CD4-positive, alpha-beta T cell (primary cell): ENCODE measurements at regions of chr2 and their contacts with region 1.

Region 1: DNA sequence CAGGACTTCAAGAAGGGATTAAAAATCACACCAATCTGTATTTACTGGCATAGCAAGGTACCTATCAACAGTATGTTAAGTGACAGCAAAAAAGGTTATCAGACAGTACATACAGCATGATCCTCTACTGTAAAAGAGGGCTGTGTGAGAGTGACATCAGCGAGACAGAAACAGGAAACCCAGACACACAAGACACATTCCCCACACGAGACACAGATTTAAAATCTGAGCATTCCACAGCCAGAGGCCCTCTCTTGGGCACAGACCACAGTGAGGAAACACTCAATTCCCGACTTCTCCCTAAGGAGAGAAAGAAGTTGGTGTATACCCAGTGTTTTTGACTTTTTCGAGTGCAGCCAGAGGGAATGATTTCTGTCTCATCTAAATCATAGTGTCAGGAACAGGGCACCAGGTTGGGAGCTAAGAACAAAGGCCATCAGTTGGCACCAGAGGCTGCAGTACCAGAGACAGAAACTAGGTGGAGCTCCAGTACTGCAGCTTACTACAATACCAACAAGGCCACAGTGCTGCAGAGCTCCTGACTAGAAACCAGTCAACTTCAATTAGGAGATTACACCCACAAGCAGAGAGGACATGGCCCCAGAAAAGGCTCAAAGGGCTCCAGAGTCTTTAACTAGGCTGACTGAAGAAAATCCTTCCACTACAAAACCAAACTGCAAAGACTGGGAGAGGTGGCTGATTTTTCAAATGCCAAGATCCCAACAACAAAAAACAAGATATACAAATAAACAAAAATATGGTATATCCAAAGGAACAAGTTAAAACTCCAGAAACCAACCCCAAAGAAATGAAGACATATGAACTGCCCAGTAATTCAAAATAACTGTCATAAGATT is 41.0 kb downstream of the UNC50 start:
- DNase-seq: peak; percentile 72 to 91 (median 79)
- ATAC-seq: peak; percentile 92
- H3K4me3 ChIP-seq: no peak overlapping the region
- H3K4me3 Mint-ChIP-seq: peak overlapping the region; percentile 36
- H3K27ac ChIP-seq: peak overlapping the region in 1 of 2 donors; percentile 55
- H3K27ac Mint-ChIP-seq: peak overlapping the region; percentile 92
- H3K4me1 ChIP-seq: peaks cover 17% of the 10 kb centered on the region
- H3K4me1 Mint-ChIP-seq: peaks cover 62% of the 10 kb centered on the region
- H3K27me3 ChIP-seq: no peaks in the 10 kb centered on the region
- H3K27me3 Mint-ChIP-seq: no peaks in the 10 kb centered on the region
- CTCF ChIP-seq: peak; percentile 98

Region 2: GRCh38 chr2:98404556-98405220 is 244.7 kb before region 1 on chr2:
- CTCF ChIA-PET with region 1: no interaction called
- POLR2A ChIA-PET with region 1: no interaction called
- intact Hi-C with region 1: no loop called
- DNase-seq: no peak
- ATAC-seq: no peak
- H3K4me3 ChIP-seq: no peak overlapping the region
- H3K4me3 Mint-ChIP-seq: no peak overlapping the region
- H3K27ac ChIP-seq: no peak overlapping the region
- H3K27ac Mint-ChIP-seq: no peak overlapping the region
- H3K4me1 ChIP-seq: no peaks in the 10 kb centered on the region
- H3K4me1 Mint-ChIP-seq: no peaks in the 10 kb centered on the region
- H3K27me3 ChIP-seq: no peaks in the 10 kb centered on the region
- H3K27me3 Mint-ChIP-seq: no peaks in the 10 kb centered on the region
- CTCF ChIP-seq: no peak

Region 3: GRCh38 chr2:98568881-98569793 is 80.2 kb before region 1 on chr2:
- CTCF ChIA-PET with region 1: interaction called, 4 read pairs
- POLR2A ChIA-PET with region 1: interaction called, 3 read pairs
- intact Hi-C with region 1: loop called in 1 of 2 experiments (anchors 5 kb)
- DNase-seq: peak; percentile 55 to 83 (median 68)
- ATAC-seq: peak; percentile 92
- H3K4me3 ChIP-seq: no peak overlapping the region
- H3K4me3 Mint-ChIP-seq: no peak overlapping the region
- H3K27ac ChIP-seq: no peak overlapping the region
- H3K27ac Mint-ChIP-seq: peak overlapping the region; percentile 36
- H3K4me1 ChIP-seq: no peaks in the 10 kb centered on the region
- H3K4me1 Mint-ChIP-seq: no peaks in the 10 kb centered on the region
- H3K27me3 ChIP-seq: no peaks in the 10 kb centered on the region
- H3K27me3 Mint-ChIP-seq: no peaks in the 10 kb centered on the region
- CTCF ChIP-seq: peak; percentile 93

Region 4: DNA sequence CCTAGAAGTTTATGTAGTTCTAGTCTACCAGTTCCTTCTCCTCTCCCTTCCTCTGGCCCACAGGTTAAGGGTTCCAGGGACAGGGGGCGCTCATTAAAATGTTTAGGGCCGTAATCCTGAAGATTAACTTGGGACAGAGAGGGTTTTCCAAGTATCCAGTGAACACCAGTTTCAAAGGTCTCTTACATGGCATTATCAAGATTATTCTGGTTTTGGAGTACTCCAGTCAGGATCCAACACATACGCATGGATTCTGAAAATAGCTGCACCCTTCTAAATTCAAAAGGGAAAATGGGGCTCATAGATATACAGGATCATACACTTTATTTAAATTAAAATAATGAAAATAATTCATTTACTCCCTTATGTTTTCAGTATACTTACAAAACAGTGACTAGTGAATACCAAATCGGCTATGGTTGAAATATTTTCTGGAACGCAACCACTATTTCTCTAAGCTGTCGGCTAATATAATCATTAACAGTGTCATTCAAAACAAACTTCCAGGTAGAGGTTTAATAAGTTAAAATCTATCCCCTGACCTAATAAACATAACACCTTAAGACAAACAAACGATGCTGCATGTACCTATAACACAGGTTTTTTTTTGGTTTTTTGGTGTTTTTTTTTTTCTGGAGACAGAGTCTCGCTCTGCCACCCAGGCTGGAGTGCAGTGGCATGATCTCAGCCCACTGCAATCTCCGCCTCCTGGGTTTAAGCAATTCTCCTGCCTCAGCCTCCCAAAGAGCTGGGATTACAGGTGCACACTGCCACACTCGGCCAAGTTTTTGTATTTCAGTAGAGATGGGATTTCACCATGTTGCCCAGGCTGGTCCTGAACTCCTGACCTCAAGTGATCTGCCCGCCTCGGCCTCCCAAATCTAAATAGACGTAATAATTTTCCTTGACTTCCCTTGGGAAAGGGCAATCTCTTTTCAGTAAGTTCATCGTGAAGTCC is 36.8 kb after region 1 on chr2:
- CTCF ChIA-PET with region 1: interaction called, 10 read pairs
- POLR2A ChIA-PET with region 1: interaction called, 4 read pairs
- intact Hi-C with region 1: no loop called
- DNase-seq: no peak
- ATAC-seq: no peak
- H3K4me3 ChIP-seq: no peak overlapping the region
- H3K4me3 Mint-ChIP-seq: no peak overlapping the region
- H3K27ac ChIP-seq: peak overlapping the region in 1 of 2 donors; percentile 3
- H3K27ac Mint-ChIP-seq: peak overlapping the region; percentile 92
- H3K4me1 ChIP-seq: peaks cover 39% of the 10 kb centered on the region
- H3K4me1 Mint-ChIP-seq: peaks cover 90% of the 10 kb centered on the region
- H3K27me3 ChIP-seq: no peaks in the 10 kb centered on the region
- H3K27me3 Mint-ChIP-seq: no peaks in the 10 kb centered on the region
- CTCF ChIP-seq: no peak

Region 5: GRCh38 chr2:98731041-98731893 is 81.9 kb after region 1 on chr2 and contains the start of gene MGAT4A:
- CTCF ChIA-PET with region 1: interaction called, 30 read pairs
- POLR2A ChIA-PET with region 1: interaction called, 25 read pairs
- intact Hi-C with region 1: loop called (anchors 1 to 2 kb)
- DNase-seq: peak; percentile 65 to 91 (median 76)
- ATAC-seq: peak; percentile 70
- H3K4me3 ChIP-seq: peak within 1 kb of the TSS; percentile 87
- H3K4me3 Mint-ChIP-seq: peak within 1 kb of the TSS; percentile 99
- H3K27ac ChIP-seq: peak within 1 kb of the TSS; percentile 77 to 91
- H3K27ac Mint-ChIP-seq: peak within 1 kb of the TSS; percentile 100
- H3K4me1 ChIP-seq: peaks cover 50% of the 10 kb centered on the region
- H3K4me1 Mint-ChIP-seq: peaks cover 80% of the 10 kb centered on the region
- H3K27me3 ChIP-seq: no peaks in the 10 kb centered on the region
- H3K27me3 Mint-ChIP-seq: peaks cover 4% of the 10 kb centered on the region
- CTCF ChIP-seq: no peak
- total RNA-seq, gene MGAT4A: 200 to 204 TPM

Region 6: DNA sequence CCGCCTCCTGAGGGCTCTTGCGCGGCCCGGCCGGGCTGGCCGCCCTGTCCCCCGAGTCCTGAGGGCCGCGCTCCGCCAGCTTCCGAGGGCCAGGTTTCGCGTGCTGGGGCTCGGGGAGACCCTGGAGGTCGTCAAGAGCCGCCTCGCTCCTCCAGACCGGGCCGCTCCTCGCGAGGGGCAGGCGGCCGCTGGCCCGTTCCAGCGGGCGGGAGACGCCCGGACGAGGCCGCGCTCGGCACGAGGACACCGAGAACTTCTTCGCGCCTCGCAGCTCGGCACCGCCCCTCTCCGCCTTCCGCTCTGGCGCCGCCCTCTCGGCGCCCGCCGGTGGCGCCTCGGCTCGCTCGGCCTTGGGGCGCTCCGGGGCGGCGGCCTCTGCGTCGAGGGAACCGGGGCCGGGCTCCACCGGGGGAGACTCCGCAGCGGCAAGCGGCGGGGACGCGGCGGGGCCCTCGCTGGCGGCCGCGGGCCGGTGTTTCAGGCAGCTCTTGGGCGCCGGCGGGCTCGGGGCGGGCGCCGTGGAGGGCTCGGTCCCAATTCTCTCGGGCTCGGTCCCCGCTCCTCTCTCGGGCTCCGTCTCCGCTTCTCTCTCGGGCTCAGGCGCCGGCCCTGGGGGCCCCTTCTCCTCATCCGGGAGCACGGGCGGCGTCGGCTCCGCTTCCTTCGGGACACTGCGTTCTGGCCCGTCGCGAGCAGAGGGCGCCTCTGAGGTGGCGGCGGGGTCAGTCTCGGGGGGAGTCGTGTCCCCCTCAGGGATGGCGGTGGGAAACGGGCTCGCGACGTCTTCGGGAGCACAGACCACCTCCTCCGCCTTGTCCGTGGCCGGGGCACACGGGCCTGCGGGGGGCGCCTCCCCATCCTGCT is 173.2 kb after region 1 on chr2:
- CTCF ChIA-PET with region 1: interaction called, 18 read pairs
- POLR2A ChIA-PET with region 1: interaction called, 3 read pairs
- intact Hi-C with region 1: no loop called
- DNase-seq: peak; percentile 33 to 87 (median 56)
- ATAC-seq: peak; percentile 91
- H3K4me3 ChIP-seq: peak overlapping the region; percentile 57
- H3K4me3 Mint-ChIP-seq: peak overlapping the region; percentile 62
- H3K27ac ChIP-seq: no peak overlapping the region
- H3K27ac Mint-ChIP-seq: no peak overlapping the region
- H3K4me1 ChIP-seq: peaks cover 29% of the 10 kb centered on the region
- H3K4me1 Mint-ChIP-seq: peaks cover 53% of the 10 kb centered on the region
- H3K27me3 ChIP-seq: no peaks in the 10 kb centered on the region
- H3K27me3 Mint-ChIP-seq: no peaks in the 10 kb centered on the region
- CTCF ChIP-seq: peak; percentile 43

Region 7: GRCh38 chr2:99066075-99066958 is 417.0 kb after region 1 on chr2:
- CTCF ChIA-PET with region 1: interaction called, 13 read pairs
- POLR2A ChIA-PET with region 1: interaction called, 5 read pairs
- intact Hi-C with region 1: loop called (anchors 1 to 10 kb)
- DNase-seq: peak in 7 of 14 experiments; percentile 3 to 76 (median 52)
- ATAC-seq: peak; percentile 89
- H3K4me3 ChIP-seq: no peak overlapping the region
- H3K4me3 Mint-ChIP-seq: no peak overlapping the region
- H3K27ac ChIP-seq: peak overlapping the region; percentile 43 to 72
- H3K27ac Mint-ChIP-seq: no peak overlapping the region
- H3K4me1 ChIP-seq: peaks cover 3% of the 10 kb centered on the region
- H3K4me1 Mint-ChIP-seq: peaks cover 5% of the 10 kb centered on the region
- H3K27me3 ChIP-seq: no peaks in the 10 kb centered on the region
- H3K27me3 Mint-ChIP-seq: no peaks in the 10 kb centered on the region
- CTCF ChIP-seq: peak; percentile 7